PC-9 (cell line): ENCODE measurements at regions of chr13 and their contacts with region 1.

Region 1: GRCh38 chr13:27251166-27252091 is at the start of gene RPL21:
- DNase-seq: peak; percentile 77 to 86
- H3K4me3 ChIP-seq: peak within 1 kb of the TSS; percentile 89
- H3K27ac ChIP-seq: peak within 1 kb of the TSS; percentile 93
- H3K4me1 ChIP-seq: peaks cover 24% of the 10 kb centered on the region
- H3K27me3 ChIP-seq: no peaks in the 10 kb centered on the region
- CTCF ChIP-seq: no peak
- total RNA-seq, gene RPL21: 711 and 754 TPM in 2 replicates

Region 2: DNA sequence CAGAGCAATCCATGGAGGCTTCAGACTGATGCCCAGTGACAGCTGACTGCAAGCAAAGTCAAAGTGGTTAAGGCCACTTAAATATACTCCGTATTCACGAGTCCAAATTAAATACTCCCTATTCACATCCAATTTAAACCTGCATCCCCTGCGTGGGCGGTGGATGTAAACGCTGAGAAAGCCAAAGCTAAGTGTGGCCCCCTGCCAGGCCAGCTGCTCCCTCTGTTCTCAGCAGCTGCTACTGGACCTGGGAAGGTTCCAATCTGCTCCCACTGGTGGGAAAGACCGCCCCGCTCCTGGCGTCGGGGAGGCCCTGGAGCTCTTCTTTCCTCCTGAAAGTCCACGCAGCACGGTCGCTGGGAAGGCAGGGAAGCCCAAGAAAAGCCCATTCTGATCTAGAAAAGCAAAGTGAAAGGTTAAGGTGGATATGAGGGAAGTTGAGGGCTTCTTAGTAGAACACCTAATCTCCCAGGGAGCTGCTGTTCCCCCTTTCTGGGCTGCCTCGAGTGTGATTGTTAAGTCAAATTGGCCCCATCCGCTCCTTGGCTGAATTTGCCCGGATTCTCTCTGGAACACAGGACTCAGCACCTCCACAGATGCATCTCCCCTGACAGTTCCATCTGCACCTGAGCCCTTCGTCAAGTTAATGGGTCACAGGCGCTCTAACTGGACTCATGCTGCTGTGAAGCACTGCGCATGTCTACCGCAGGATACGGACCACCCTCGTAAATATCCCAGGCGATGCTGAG is 285.3 kb before region 1 on chr13:
- CTCF ChIA-PET with region 1: no interaction called
- POLR2A ChIA-PET with region 1: no interaction called
- intact Hi-C with region 1: no loop called
- DNase-seq: no peak
- H3K4me3 ChIP-seq: no peak overlapping the region
- H3K27ac ChIP-seq: no peak overlapping the region
- H3K4me1 ChIP-seq: no peaks in the 10 kb centered on the region
- H3K27me3 ChIP-seq: peaks cover 22% of the 10 kb centered on the region
- CTCF ChIP-seq: no peak

Region 3: DNA sequence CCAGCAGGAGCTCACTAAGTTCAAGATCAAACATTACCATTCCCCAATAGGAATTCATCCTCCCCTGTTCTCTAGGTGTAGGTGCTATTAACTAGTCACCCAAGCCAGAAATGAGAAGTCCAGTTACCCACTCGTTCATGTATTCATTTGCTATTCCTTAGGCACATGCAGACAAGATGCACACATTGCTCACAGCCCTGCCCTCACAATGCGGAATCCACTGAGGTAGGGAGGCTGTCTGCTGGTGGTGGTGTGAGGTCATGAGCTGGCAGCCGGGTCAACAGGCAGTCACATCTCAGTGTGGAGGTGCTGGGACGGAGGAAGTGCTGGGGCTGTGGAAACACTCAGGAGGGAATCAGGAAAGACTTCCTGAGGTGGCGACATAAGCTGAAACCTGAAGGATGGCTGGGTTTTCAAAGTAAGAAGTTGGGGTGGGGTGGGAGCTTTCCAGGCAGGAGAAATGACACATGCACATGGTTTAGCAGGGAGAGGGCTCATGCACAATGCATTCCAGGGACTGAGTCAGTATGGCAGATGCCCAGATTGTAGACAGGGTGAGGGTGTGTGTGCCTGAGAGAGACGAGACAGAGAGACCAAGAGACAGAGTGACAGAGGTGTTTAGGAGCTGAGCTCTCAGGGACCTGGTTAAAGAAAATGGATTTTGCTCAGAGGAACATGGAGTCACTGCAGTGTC is 197.4 kb before region 1 on chr13:
- CTCF ChIA-PET with region 1: interaction called, 4 read pairs
- POLR2A ChIA-PET with region 1: no interaction called
- intact Hi-C with region 1: loop called (anchors 2 kb)
- DNase-seq: peak; percentile 66 to 95
- H3K4me3 ChIP-seq: no peak overlapping the region; the same call in 1 of the 2 replicates
- H3K27ac ChIP-seq: peak overlapping the region; percentile 83
- H3K4me1 ChIP-seq: peaks cover 45% of the 10 kb centered on the region
- H3K27me3 ChIP-seq: no peaks in the 10 kb centered on the region
- CTCF ChIP-seq: no peak

Region 4: GRCh38 chr13:27171827-27172494 is 79.5 kb before region 1 on chr13:
- CTCF ChIA-PET with region 1: no interaction called
- POLR2A ChIA-PET with region 1: no interaction called
- intact Hi-C with region 1: loop called (anchors 1 kb)
- DNase-seq: peak; percentile 74 to 93
- H3K4me3 ChIP-seq: peak overlapping the region; percentile 90
- H3K27ac ChIP-seq: peak overlapping the region; percentile 61
- H3K4me1 ChIP-seq: peaks cover 28% of the 10 kb centered on the region
- H3K27me3 ChIP-seq: no peaks in the 10 kb centered on the region
- CTCF ChIP-seq: no peak

Region 5: GRCh38 chr13:27186295-27186694 is 65.1 kb before region 1 on chr13:
- CTCF ChIA-PET with region 1: no interaction called
- POLR2A ChIA-PET with region 1: no interaction called
- intact Hi-C with region 1: loop called (anchors 1 kb)
- DNase-seq: peak in 1 of 2 experiments; percentile 84
- H3K4me3 ChIP-seq: no peak overlapping the region
- H3K27ac ChIP-seq: peak overlapping the region; percentile 54
- H3K4me1 ChIP-seq: peaks cover 70% of the 10 kb centered on the region
- H3K27me3 ChIP-seq: no peaks in the 10 kb centered on the region
- CTCF ChIP-seq: no peak

Region 6: GRCh38 chr13:27261376-27262150 is 10.1 kb after region 1 on chr13:
- CTCF ChIA-PET with region 1: no interaction called
- POLR2A ChIA-PET with region 1: interaction called, 11 read pairs
- intact Hi-C with region 1: no loop called
- DNase-seq: peak; percentile 53 to 94
- H3K4me3 ChIP-seq: no peak overlapping the region
- H3K27ac ChIP-seq: peak overlapping the region; percentile 43
- H3K4me1 ChIP-seq: peaks cover 21% of the 10 kb centered on the region
- H3K27me3 ChIP-seq: no peaks in the 10 kb centered on the region
- CTCF ChIP-seq: no peak

Region 7: DNA sequence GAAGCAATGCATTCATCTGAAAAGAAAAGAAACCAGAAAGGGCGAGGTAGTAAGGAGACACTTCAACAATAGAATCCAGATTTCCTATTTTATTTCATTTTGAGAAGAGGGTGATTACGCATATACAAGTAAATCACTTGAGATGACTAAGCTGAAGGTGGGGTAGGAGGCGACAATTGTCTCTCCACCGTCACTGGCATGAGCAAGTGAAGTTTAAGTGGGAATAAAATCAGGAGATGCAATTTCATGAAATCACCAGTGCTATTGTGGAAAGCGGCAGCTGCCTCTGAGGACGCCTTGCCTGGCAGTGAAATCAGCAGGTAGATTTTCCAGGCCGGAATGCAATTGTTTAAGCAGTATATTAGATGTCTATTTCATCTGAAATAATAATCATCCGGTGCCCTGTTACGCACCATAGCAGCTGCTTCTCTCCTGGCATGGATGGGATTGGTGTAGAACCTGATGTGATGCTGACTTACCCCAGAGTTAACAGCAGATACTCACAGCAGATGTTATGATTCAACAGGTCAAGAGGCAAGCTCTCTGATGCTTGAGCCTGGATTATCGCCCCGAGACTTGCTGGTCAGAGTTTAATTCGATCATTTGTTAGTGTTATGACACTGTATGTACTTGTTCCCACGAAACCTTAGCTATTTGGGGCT is 83.5 kb after region 1 on chr13:
- CTCF ChIA-PET with region 1: no interaction called
- POLR2A ChIA-PET with region 1: no interaction called
- intact Hi-C with region 1: no loop called
- DNase-seq: no peak
- H3K4me3 ChIP-seq: no peak overlapping the region
- H3K27ac ChIP-seq: no peak overlapping the region
- H3K4me1 ChIP-seq: no peaks in the 10 kb centered on the region; the same call in 1 of the 2 replicates
- H3K27me3 ChIP-seq: peaks cover under 1% of the 10 kb centered on the region; the same call in 1 of the 2 replicates
- CTCF ChIP-seq: no peak

Region 8: GRCh38 chr13:27541386-27541785 is 290.0 kb after region 1 on chr13:
- CTCF ChIA-PET with region 1: no interaction called
- POLR2A ChIA-PET with region 1: no interaction called
- intact Hi-C with region 1: no loop called
- DNase-seq: no peak
- H3K4me3 ChIP-seq: no peak overlapping the region
- H3K27ac ChIP-seq: no peak overlapping the region
- H3K4me1 ChIP-seq: no peaks in the 10 kb centered on the region
- H3K27me3 ChIP-seq: no peaks in the 10 kb centered on the region
- CTCF ChIP-seq: no peak